SK-N-SH (cell line): ENCODE measurements at regions of chr6 and their contacts with region 1.

Region 1: GRCh38 chr6:36885461-36886401 is at the start of gene C6orf89:
- DNase-seq: peak; percentile 94
- H3K4me3 ChIP-seq: peak within 1 kb of the TSS; percentile 90 to 96
- H3K27ac ChIP-seq: peak within 1 kb of the TSS; percentile 73 to 84
- H3K4me1 ChIP-seq: peaks cover 0 to 5% of the 10 kb centered on the region in 2 experiments; a peak in 1 of 4 replicates
- H3K27me3 ChIP-seq: no peaks in the 10 kb centered on the region
- CTCF ChIP-seq: peak; percentile 79
- EP300 ChIP-seq: peak in 1 of 2 experiments; percentile 36; a peak in 1 of 4 replicates
- RAD21 ChIP-seq: peak; percentile 58
- polyA plus RNA-seq, gene C6orf89: 20.4 and 29.8 TPM in 2 replicates

Region 2: DNA sequence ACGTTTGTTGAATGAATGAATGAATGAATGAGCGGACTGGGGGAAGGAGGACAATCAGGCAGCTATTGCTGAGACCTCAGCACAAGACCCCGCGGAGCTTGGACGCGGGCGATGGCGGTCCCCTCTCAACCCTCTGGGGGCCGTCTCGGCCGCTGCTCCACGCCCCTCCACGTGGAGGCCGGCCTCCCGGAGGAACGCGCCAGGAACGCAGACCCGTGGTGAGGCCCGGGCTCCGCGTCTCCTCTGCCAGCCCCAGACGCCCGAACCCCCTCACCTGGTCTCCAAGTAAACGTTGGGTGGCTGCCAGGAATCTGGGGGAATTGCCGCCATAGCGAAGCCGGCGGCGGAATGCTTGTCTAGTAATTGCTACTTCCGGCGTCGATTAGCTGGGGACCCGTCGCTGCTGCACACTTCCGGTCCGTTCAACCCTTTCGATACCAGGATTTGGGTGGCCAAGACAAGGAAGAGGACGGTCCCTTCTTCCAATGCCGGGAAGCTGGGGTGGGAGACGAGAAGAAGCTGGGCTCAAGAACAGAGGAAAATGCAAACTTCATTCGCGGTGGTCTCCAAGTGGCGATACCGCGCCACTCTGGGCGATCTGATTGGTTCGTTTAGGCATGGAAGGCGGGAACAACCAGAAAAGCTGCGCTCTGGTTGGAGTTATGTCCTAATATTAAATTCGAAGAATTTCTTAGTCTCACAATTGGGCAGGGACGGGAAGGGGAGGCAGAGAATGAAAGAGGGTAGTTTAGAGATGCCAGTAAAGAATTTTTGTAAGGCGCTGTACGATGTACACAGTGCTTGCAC is 11.1 kb before region 1 on chr6 and contains the start of gene PPIL1:
- CTCF ChIA-PET with region 1: interaction called, 37 read pairs
- POLR2A ChIA-PET with region 1: interaction called, 26 read pairs
- DNase-seq: peak; percentile 94
- H3K4me3 ChIP-seq: peak within 1 kb of the TSS; percentile 76 to 87
- H3K27ac ChIP-seq: peak within 1 kb of the TSS; percentile 95 to 100
- H3K4me1 ChIP-seq: peaks cover 0 to 10% of the 10 kb centered on the region in 2 experiments; a peak in 2 of 4 replicates
- H3K27me3 ChIP-seq: no peaks in the 10 kb centered on the region
- CTCF ChIP-seq: no peak
- EP300 ChIP-seq: peak in 1 of 2 experiments; percentile 6; a peak in 2 of 4 replicates
- RAD21 ChIP-seq: no peak
- polyA plus RNA-seq, gene PPIL1: 36.6 and 48.4 TPM in 2 replicates

Region 3: DNA sequence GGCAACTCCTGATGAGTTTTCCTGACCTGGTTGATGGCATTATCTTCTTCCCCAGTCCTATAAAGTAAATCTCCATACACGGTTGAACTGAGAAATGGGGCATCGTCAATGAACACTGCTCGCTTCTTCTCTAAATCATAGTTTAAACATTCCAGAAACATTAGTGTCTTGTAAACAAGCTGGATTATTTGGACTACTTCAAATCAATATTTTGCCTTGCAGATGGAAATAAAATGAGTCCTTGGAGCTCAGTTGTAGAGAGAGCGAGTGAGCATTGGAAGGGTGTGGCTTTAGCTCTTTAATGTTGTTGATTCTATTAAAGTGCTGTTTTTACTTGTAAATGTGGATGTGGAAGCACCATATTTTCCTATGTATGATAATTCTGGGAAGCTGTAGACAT is 18.4 kb after region 1 on chr6:
- CTCF ChIA-PET with region 1: interaction called, 13 read pairs
- POLR2A ChIA-PET with region 1: no interaction called
- DNase-seq: no peak
- H3K4me3 ChIP-seq: no peak overlapping the region
- H3K27ac ChIP-seq: no peak overlapping the region
- H3K4me1 ChIP-seq: no peaks in the 10 kb centered on the region; a peak in 1 of 4 replicates
- H3K27me3 ChIP-seq: no peaks in the 10 kb centered on the region
- CTCF ChIP-seq: no peak
- EP300 ChIP-seq: no peak
- RAD21 ChIP-seq: no peak

Region 4: GRCh38 chr6:37011656-37012378 is 126.1 kb after region 1 on chr6:
- CTCF ChIA-PET with region 1: interaction called, 74 read pairs
- POLR2A ChIA-PET with region 1: no interaction called
- DNase-seq: no peak
- H3K4me3 ChIP-seq: no peak overlapping the region
- H3K27ac ChIP-seq: no peak overlapping the region
- H3K4me1 ChIP-seq: no peaks in the 10 kb centered on the region
- H3K27me3 ChIP-seq: no peaks in the 10 kb centered on the region
- CTCF ChIP-seq: no peak
- EP300 ChIP-seq: no peak
- RAD21 ChIP-seq: no peak